A549 (cell line): ENCODE measurements at regions of chr4 and their contacts with region 1.

Region 1: DNA sequence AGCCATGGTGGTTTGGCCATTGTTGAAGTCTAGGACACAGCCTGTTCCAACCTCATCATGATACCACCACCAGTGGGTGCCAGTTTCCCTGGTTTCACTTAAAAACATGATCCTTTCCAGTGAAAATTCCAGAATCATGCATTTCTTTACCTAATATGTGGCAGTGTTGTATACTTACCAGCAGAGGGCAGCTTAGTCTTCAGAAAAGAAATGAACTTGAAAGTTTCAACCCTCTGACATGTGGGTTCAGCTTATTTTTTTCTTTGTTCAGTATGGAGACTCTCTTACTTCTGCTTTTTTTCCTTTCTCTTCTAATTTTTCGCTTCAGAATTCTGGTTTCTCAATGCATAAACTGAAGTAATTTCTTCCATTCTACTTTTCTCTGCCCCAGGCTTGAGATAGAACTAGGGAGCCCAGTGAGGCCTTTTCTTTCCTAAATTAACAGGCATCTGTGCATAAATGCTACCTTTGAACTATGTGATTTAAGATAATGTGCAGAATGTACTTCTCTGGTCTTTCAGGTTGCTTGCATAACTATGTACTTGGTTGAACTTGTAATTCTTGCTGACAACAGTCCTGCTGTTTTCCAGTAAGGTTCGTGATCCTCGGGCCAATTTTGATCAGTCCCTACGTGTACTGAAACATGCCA is 10.7 kb downstream of the LIAS start:
- DNase-seq: peak; percentile 41 to 90
- ATAC-seq: peak; percentile 85 to 91; a peak in 5 of 6 replicates
- H3K4me3 ChIP-seq: no peak overlapping the region
- H3K27ac ChIP-seq: peak overlapping the region; percentile 85 to 89
- H3K4me1 ChIP-seq: peaks cover 57% of the 10 kb centered on the region
- CTCF ChIP-seq: peak; percentile 96
- EP300 ChIP-seq: no peak
- POLR2A ChIP-seq: no peak
- RAD21 ChIP-seq: peak; percentile 92 to 95

Region 2: DNA sequence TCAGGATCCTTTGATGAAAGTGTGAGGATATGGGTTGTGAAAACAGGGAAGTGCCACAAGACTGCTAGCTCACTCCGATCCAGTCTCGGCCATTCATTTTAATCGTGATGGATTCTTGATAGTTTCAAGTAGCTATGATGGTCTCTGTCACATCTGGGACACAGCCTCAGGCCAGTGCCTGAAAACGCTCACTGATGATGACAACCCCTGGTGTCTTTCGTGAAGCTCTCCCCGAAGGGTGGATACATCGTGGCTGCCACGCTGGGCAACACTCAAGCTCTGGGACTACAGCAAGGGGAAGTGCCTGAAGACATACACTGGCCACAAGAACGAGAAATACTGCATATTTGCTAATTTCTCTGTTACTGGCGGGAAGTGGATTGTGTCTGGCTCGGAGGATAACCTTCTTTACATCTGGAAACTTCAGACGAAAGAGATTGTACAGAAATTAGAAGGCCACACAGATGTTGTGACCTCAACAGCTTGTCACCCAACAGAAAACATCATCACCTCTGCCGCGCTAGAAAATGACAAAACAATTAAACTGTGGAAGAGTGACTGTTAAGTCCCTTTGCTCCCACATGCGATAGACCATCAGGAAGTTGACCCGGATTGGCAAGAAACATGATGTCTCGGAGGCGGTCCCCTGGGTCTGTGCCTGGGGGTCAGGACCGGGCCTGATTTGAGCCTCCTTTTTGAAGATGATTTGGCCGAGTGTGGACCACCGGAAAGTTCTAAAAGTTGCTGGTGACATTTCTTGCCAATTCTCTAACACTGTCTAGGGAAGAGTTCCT is 11.5 kb after region 1 on chr4:
- CTCF ChIA-PET with region 1: interaction called, 10 read pairs
- POLR2A ChIA-PET with region 1: no interaction called
- DNase-seq: no peak
- ATAC-seq: no peak
- H3K4me3 ChIP-seq: no peak overlapping the region
- H3K27ac ChIP-seq: no peak overlapping the region
- H3K4me1 ChIP-seq: no peaks in the 10 kb centered on the region
- CTCF ChIP-seq: no peak
- EP300 ChIP-seq: no peak
- POLR2A ChIP-seq: no peak
- RAD21 ChIP-seq: no peak

Region 3: DNA sequence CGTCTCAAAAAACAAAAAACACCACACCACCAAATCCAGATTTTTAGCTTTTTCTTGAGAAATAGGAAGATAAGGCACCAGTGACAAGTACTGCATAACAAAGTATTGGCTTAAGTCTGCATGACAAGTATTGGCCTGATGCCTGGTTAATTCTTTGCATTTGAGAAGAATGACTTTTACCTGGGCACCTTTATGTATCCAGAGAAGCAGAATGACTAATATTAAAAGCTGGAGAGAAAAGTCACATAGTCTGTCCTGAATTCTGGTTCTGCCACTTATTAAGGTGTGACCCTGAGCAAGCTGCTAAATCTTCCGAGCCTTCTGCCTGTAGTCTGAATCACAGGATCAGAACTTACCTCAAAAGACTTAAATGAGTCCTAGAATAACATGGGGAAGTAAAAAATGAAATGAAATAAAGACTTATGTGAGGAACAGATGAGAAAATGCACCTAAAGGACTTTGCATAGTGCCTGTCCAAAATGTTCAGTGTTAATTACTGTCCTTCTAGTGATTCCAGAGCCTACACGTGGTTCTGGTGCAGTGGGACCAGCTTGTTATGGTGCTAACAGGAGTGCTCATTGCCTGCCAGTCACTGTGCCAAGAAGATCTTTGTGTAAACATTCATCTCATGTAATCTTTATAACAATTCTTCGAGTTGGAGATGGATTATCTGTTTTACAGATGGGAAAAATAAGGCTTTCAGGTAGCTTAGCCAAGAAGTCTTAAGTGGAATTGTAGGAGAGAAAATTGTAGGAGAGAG is 26.1 kb after region 1 on chr4:
- CTCF ChIA-PET with region 1: interaction called, 12 read pairs
- POLR2A ChIA-PET with region 1: no interaction called
- DNase-seq: peak in 1 of 2 experiments; percentile 55
- ATAC-seq: peak; percentile 58 to 81
- H3K4me3 ChIP-seq: no peak overlapping the region
- H3K27ac ChIP-seq: peak overlapping the region; percentile 59 to 71
- H3K4me1 ChIP-seq: peaks cover 49% of the 10 kb centered on the region
- CTCF ChIP-seq: no peak
- EP300 ChIP-seq: no peak
- POLR2A ChIP-seq: no peak
- RAD21 ChIP-seq: no peak

Region 4: GRCh38 chr4:39527273-39528060 is 57.9 kb after region 1 on chr4 and contains the start of gene UGDH:
- CTCF ChIA-PET with region 1: interaction called, 13 read pairs
- POLR2A ChIA-PET with region 1: interaction called, 17 read pairs
- DNase-seq: peak; percentile 85 to 98
- ATAC-seq: peak; percentile 89 to 94
- H3K4me3 ChIP-seq: peak within 1 kb of the TSS; percentile 92
- H3K27ac ChIP-seq: peak within 1 kb of the TSS; percentile 96 to 99
- H3K4me1 ChIP-seq: peaks cover 5% of the 10 kb centered on the region; the same call in 1 of the 3 replicates
- CTCF ChIP-seq: 0 out of 3 replicates have a peak, but pooled peaks have one; percentile 6
- EP300 ChIP-seq: no peak
- POLR2A ChIP-seq: peak; percentile 98
- RAD21 ChIP-seq: peak in 1 of 2 experiments; percentile 18; a peak in 1 of 5 replicates
- polyA plus RNA-seq, gene UGDH: 417 and 610 TPM in 2 replicates

Region 5: GRCh38 chr4:39638354-39639240 is 169.0 kb after region 1 on chr4 and contains the start of gene SMIM14:
- CTCF ChIA-PET with region 1: interaction called, 10 read pairs
- POLR2A ChIA-PET with region 1: interaction called, 4 read pairs
- DNase-seq: peak; percentile 89 to 97
- ATAC-seq: peak; percentile 91 to 93
- H3K4me3 ChIP-seq: peak within 1 kb of the TSS; percentile 85
- H3K27ac ChIP-seq: peak within 1 kb of the TSS; percentile 96 to 97
- H3K4me1 ChIP-seq: peaks cover 34% of the 10 kb centered on the region
- CTCF ChIP-seq: no peak
- EP300 ChIP-seq: no peak
- POLR2A ChIP-seq: peak; percentile 66
- RAD21 ChIP-seq: peak in 1 of 2 experiments; percentile 15; a peak in 1 of 5 replicates
- polyA plus RNA-seq, gene SMIM14: 81.3 and 109 TPM in 2 replicates

Region 6: GRCh38 chr4:39761005-39761667 is 291.6 kb after region 1 on chr4:
- CTCF ChIA-PET with region 1: no interaction called
- POLR2A ChIA-PET with region 1: no interaction called
- DNase-seq: no peak
- ATAC-seq: no peak
- H3K4me3 ChIP-seq: no peak overlapping the region
- H3K27ac ChIP-seq: no peak overlapping the region
- H3K4me1 ChIP-seq: no peaks in the 10 kb centered on the region
- CTCF ChIP-seq: no peak
- EP300 ChIP-seq: no peak
- POLR2A ChIP-seq: no peak
- RAD21 ChIP-seq: no peak